ENCODE measurements at regions of chr17 and their contacts with region 1.

Region 1: DNA sequence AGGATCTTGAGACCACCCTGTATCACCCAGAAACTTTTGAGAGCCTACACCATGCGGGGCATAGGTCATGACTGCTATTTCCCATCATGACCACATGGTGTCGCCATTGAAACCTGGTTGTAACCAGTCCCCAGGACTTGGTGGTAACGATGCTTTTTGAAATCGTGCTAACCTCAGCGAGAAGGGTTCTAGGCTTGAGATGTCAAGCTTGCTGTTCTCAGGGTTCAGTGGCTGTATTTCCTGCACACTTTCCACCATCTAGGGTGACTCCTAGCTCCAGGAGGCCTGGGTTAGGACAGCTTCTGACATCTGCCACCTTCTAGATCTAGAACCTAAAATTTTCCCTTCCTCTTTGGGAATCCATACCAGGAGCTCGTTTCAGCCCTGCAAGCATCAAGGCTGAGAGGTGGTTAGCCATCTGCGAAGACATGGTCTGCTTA is 13.0 kb upstream of the SPNS3 start:
- DNase-seq: peak; percentile 52 to 55
- H3K4me3 ChIP-seq: no peak overlapping the region
- H3K27ac ChIP-seq: no peak overlapping the region
- H3K4me1 ChIP-seq: no peaks in the 10 kb centered on the region
- H3K27me3 ChIP-seq: no peaks in the 10 kb centered on the region
- CTCF ChIP-seq: peak; percentile 31 to 87 (median 72)
- POLR2A ChIP-seq: no peak

Region 2: DNA sequence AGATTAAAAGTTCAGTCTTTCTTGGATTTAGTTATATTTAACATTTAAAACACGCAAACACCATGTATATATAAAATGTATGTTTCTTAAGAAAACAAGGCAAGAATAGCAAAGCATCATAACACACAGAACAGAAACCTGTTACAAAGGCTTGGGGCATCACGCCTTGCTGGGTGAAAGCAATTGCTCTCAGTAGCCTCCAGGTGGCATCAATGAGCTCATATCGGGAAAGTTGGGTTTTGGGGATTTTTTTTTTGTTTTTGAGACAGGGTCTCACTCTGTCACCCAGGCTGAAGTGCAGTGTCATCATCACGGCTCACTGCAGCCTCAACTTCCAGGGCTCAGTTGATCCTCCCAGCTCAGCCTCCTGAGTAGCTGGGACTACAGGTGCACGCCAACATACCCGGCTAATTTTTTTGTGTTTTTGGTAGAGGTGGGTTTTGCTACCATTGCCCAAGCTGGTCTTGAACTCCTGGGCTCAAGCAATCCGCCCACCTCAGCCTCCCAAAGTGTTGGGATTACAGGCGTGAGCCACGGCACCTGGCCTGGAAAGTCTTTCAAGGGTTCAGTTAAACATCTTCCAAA is 220.8 kb before region 1 on chr17:
- intact Hi-C with region 1: loop called (anchors 5 kb)
- DNase-seq: peak; percentile 10 to 27
- H3K4me3 ChIP-seq: no peak overlapping the region
- H3K27ac ChIP-seq: no peak overlapping the region
- H3K4me1 ChIP-seq: peaks cover 4% of the 10 kb centered on the region in 2 donors
- H3K27me3 ChIP-seq: no peaks in the 10 kb centered on the region
- CTCF ChIP-seq: peak; percentile 32 to 72 (median 56)
- POLR2A ChIP-seq: no peak

Region 3: GRCh38 chr17:4565209-4566141 is 144.8 kb after region 1 on chr17:
- intact Hi-C with region 1: loop called (anchors 10 kb)
- DNase-seq: peak; percentile 51 to 52
- H3K4me3 ChIP-seq: no peak overlapping the region
- H3K27ac ChIP-seq: no peak overlapping the region
- H3K4me1 ChIP-seq: no peaks in the 10 kb centered on the region
- H3K27me3 ChIP-seq: no peaks in the 10 kb centered on the region
- CTCF ChIP-seq: peak; percentile 51 to 81 (median 57)
- POLR2A ChIP-seq: no peak

Region 4: GRCh38 chr17:4583782-4584100 is 163.0 kb after region 1 on chr17:
- intact Hi-C with region 1: no loop called
- DNase-seq: no peak
- H3K4me3 ChIP-seq: no peak overlapping the region
- H3K27ac ChIP-seq: no peak overlapping the region
- H3K4me1 ChIP-seq: peaks cover 7 to 13% of the 10 kb centered on the region in 2 donors
- H3K27me3 ChIP-seq: peaks cover 11% of the 10 kb centered on the region
- CTCF ChIP-seq: no peak
- POLR2A ChIP-seq: no peak

Region 5: DNA sequence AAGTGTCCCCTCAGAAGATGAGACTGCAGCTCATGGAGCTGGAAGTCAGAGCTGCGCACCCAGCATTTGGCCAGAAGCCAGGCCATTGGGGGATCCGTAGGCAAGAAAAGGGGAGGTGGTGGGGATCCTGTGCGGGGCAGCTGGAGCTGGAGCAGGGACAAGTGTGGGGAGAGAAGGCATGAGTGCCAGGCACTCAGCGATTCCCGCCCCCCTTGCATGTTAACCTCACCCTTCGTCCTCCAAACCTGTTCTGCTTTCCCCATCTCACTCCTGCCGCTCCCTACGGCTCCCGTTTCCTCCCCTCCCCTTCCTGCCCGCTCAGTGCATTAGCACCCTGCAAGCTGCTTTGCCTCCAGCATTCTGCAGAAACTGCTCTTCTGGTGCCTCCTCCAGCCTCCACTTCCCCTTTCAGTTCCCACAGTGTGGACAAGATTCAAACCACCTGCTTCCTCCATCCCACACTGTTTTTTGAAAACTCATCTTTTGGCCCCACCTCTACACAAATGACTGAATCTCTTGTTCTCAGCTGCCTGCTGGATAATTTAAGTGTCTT is 215.2 kb after region 1 on chr17:
- intact Hi-C with region 1: loop called (anchors 10 kb)
- DNase-seq: no peak
- H3K4me3 ChIP-seq: no peak overlapping the region
- H3K27ac ChIP-seq: no peak overlapping the region
- H3K4me1 ChIP-seq: no peaks in the 10 kb centered on the region
- H3K27me3 ChIP-seq: no peaks in the 10 kb centered on the region
- CTCF ChIP-seq: no peak
- POLR2A ChIP-seq: no peak

Measured in thyroid gland (tissue), 4 donors.